ENCODE measurements at regions of chr9 and their contacts with region 1.

Region 1: GRCh38 chr9:131739980-131740648 is at the start of gene RAPGEF1:
- DNase-seq: peak; percentile 64
- H3K4me3 ChIP-seq: peak within 1 kb of the TSS; percentile 62 to 72
- H3K27ac ChIP-seq: peak within 1 kb of the TSS; percentile 34 to 88
- H3K4me1 ChIP-seq: peaks cover 9% of the 10 kb centered on the region
- H3K27me3 ChIP-seq: no peaks in the 10 kb centered on the region
- CTCF ChIP-seq: peak; percentile 80 to 100 (median 91)
- POLR2A ChIP-seq: no peak
- total RNA-seq, gene RAPGEF1: 55.8 to 56.9 TPM

Region 2: GRCh38 chr9:131349881-131350563 is 390.1 kb before region 1 on chr9:
- intact Hi-C with region 1: loop called (anchors 5 kb)
- DNase-seq: peak; percentile 96
- H3K4me3 ChIP-seq: peak overlapping the region; percentile 20 to 38
- H3K27ac ChIP-seq: no peak overlapping the region
- H3K4me1 ChIP-seq: no peaks in the 10 kb centered on the region
- H3K27me3 ChIP-seq: no peaks in the 10 kb centered on the region
- CTCF ChIP-seq: peak; percentile 74 to 86 (median 85)
- POLR2A ChIP-seq: no peak

Region 3: GRCh38 chr9:131502781-131503625 is 237.1 kb before region 1 on chr9 and contains the start of gene POMT1:
- intact Hi-C with region 1: no loop called
- DNase-seq: peak; percentile 88
- H3K4me3 ChIP-seq: peak within 1 kb of the TSS; percentile 87 to 92
- H3K27ac ChIP-seq: peak within 1 kb of the TSS; percentile 39 to 87
- H3K4me1 ChIP-seq: peaks cover 7% of the 10 kb centered on the region
- H3K27me3 ChIP-seq: no peaks in the 10 kb centered on the region
- CTCF ChIP-seq: no peak
- POLR2A ChIP-seq: no peak
- total RNA-seq, gene POMT1: 99.7 to 117 TPM

Region 4: GRCh38 chr9:131815971-131816873 is 76.1 kb after region 1 on chr9:
- intact Hi-C with region 1: no loop called
- DNase-seq: no peak
- H3K4me3 ChIP-seq: no peak overlapping the region
- H3K27ac ChIP-seq: no peak overlapping the region
- H3K4me1 ChIP-seq: no peaks in the 10 kb centered on the region
- H3K27me3 ChIP-seq: no peaks in the 10 kb centered on the region
- CTCF ChIP-seq: no peak
- POLR2A ChIP-seq: no peak

Measured in testis (tissue), 5 donors.